ENCODE measurements at regions of chr6 and their contacts with region 1.

Region 1: GRCh38 chr6:161273752-161274487 is at the start of gene AGPAT4:
- DNase-seq: peak; percentile 86
- H3K4me3 ChIP-seq: peak within 1 kb of the TSS; percentile 55
- H3K27me3 ChIP-seq: no peaks in the 10 kb centered on the region
- CTCF ChIP-seq: no peak
- polyA plus RNA-seq, gene AGPAT4: 3.1 and 3.7 TPM in 2 replicates

Region 2: GRCh38 chr6:160919723-160920440 is 354.0 kb before region 1 on chr6:
- CTCF ChIA-PET with region 1: no interaction called
- POLR2A ChIA-PET with region 1: no interaction called
- DNase-seq: peak; percentile 31
- H3K4me3 ChIP-seq: no peak overlapping the region
- H3K27me3 ChIP-seq: no peaks in the 10 kb centered on the region
- CTCF ChIP-seq: no peak

Region 3: DNA sequence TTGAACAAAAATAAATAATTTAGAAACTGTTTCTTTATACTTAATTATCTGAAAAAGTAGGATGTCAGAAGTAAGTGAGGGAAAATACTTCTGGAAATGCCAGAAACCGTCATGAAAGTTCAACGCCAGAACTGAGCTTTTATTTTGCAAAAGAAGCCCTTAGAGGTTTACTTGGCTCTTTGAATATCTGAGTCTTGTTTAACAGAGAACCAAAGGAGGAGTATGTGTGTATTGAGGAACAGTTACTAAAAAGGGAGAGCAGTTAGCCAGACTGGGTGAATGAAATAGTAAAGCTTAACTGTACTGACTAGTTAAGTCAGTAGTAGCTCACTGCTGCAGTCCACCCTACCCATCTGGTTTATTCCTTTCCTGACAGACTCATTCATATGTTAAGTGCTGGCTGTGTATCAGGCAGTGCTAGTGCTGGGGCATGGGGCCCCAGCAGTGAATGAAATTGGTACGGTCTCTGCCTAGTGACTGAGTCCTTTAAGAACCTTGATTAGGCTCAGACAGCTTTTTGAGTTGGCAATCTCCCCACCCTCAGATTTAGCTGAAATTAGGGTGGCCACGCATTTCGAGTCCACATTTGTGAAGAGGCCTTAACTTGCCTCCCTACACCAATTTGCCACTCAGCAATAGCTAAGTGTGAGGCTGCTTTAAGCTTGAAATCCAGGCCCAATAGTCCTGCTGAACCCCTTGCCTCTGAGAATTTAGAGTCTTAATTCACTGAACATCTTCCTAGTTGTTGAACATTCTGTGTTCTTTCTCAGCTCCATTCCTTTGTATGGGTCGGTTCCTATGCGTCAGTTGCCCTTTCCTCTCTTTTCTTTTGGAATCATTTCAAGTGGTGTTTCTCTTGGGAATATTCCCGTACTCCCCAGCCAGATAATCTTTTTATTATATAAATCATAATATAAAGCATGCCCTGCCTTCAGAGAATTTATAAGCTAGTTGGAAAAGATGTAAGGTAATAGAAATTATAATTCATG is 262.1 kb before region 1 on chr6:
- CTCF ChIA-PET with region 1: no interaction called
- POLR2A ChIA-PET with region 1: interaction called, 10 read pairs
- DNase-seq: no peak
- H3K4me3 ChIP-seq: no peak overlapping the region
- H3K27me3 ChIP-seq: no peaks in the 10 kb centered on the region
- CTCF ChIP-seq: no peak

Region 4: GRCh38 chr6:161161889-161162624 is 111.9 kb before region 1 on chr6:
- CTCF ChIA-PET with region 1: no interaction called
- POLR2A ChIA-PET with region 1: interaction called, 14 read pairs
- DNase-seq: no peak
- H3K4me3 ChIP-seq: no peak overlapping the region
- H3K27me3 ChIP-seq: no peaks in the 10 kb centered on the region; the same call in 1 of the 2 replicates
- CTCF ChIP-seq: no peak

Region 5: DNA sequence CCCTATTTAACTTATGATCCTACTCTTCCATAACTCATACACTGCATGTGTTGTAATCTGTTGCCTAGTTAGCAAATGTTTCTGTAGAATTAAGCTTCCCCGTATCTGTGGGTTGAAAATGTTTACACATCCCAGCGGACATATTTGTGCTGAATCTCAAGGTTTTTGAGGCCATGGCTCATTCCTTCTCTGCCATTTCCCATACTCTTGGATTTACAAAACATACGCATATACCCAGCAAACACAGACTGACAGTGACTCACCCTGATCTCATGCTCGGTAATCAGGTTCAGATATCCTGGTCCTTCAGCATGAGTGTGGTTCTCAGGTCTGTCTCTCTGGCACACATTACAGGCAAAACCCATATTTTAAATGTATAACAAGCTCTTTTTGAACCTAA is 58.7 kb before region 1 on chr6:
- CTCF ChIA-PET with region 1: no interaction called
- POLR2A ChIA-PET with region 1: no interaction called
- DNase-seq: peak; percentile 53
- H3K4me3 ChIP-seq: no peak overlapping the region
- H3K27me3 ChIP-seq: no peaks in the 10 kb centered on the region
- CTCF ChIP-seq: no peak

Region 6: DNA sequence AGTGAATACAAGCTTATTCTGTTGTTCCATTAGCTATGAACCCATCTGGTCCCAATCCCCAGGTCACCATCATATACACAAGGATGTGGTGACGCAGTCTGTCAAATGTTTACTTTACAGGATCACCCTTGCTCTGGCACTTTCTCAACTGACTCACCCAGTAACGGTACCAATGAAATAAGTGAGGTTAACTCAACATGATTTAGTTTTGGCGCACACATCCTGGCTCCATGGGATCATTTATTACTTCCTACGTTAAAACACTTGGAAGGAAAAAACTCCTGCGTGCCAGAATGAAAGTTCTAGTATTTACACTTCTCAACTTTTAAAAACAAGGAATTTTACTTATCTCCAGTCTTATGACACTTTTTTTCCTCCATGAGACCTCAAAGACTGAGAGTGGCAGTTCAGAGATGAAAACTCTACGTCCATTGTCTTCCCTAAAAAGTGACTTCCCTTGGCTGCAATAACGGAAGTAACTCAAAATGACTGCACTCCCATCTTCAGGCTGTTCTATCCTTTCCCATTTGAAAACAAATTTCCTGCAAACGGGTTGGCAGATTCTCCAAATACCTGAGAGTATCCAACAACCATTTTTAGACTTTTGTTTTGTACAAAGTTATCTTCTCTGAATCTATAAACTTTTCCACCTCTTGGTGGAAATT is 16.0 kb before region 1 on chr6:
- CTCF ChIA-PET with region 1: no interaction called
- POLR2A ChIA-PET with region 1: interaction called, 10 read pairs
- DNase-seq: peak; percentile 87
- H3K4me3 ChIP-seq: no peak overlapping the region
- H3K27me3 ChIP-seq: no peaks in the 10 kb centered on the region
- CTCF ChIP-seq: no peak

Region 7: DNA sequence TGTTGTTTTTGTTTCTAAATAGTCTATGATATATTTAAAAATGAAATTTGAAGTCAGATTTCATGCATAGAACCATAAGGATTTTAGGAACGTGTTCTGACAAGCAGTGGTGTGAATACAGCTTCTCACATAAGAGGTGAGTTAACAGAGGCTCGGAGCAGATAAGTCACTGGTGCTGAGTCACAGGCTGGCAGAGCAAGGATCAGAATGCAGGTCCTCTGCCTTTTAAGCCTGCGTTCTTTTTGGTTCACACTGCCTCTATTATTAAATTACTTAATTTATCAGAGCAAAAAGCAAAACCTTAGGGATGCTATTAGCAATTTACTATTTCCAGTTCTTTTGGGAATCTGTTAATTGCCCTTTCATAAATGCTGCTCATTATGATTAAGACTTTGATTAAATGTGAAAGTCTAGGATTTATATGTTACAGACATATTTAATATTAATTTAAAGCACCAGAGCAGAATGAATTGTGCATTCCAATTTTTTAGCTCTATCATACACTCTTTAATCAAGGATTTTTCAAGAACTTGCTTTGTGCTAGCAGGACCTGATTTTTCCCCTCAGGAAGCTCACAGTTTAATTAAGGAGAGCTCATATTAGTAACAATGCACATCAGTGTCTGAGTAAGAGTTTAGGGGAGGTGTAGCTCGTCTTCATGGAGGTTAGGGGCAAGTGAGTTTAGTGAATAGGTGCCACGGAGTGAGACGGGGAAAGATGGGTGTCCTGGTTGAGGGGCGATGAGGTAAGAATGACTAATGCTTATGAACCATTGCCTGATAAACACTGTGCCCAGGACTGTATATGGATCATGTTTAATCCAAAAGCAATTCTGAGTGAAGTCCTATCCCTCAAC is 212.7 kb after region 1 on chr6:
- CTCF ChIA-PET with region 1: no interaction called
- POLR2A ChIA-PET with region 1: no interaction called
- DNase-seq: no peak
- H3K4me3 ChIP-seq: no peak overlapping the region
- H3K27me3 ChIP-seq: no peaks in the 10 kb centered on the region
- CTCF ChIP-seq: no peak

Measured in BJ (cell line).